ENCODE measurements at regions of chr12 and their contacts with region 1.

Region 1: DNA sequence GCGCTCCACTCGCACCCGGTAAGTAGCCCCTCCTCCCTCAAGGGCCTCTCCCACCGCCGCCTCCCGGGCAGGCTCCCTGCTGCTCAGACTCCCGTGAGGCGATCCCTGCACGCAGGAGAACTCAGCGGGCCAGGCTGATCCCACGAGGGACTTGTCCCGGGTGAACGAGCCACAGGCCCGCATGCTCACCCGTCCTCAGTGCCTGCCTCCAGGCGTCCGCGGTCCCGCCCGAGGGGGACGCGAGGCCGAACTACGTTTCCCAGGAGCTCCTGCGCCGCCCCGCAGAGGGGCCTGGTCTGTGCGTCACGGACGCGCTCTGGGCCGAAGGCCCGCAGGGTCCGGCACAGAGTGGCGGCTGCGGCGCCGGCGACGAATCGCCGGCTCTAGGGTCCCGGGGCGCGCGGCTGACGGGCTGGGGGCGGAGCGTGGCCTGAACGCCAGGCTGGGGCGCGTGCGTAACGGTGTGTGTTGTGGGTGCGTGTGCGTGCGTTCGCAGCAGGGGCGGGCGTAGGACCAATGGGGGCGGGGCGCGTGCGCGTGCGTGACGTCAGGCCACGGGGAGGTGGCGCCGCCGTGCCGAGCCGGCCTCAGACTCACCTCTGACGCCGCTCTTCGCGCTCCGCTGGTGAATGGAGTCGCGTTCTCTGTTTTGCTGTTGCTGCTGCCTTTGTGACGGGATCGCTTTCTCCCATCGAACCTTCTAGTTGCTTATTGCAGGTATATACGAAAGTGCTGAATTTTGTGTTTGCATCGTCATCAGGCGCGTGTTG is at the starts of genes ZNF10 and ZNF891:
- DNase-seq: peak; percentile 98
- ATAC-seq: peak; percentile 90
- H3K4me3 Mint-ChIP-seq: peak within 1 kb of the TSS; percentile 86
- H3K27ac Mint-ChIP-seq: peak within 1 kb of the TSS; percentile 98
- H3K4me1 Mint-ChIP-seq: peaks cover 15% of the 10 kb centered on the region
- H3K27me3 Mint-ChIP-seq: no peaks in the 10 kb centered on the region
- total RNA-seq, gene ZNF10: 4.8 to 5.1 TPM
- total RNA-seq, gene ZNF891: 1.9 to 2.1 TPM

Region 2: GRCh38 chr12:132710422-132711168 is 419.6 kb before region 1 on chr12 and contains the start of gene PGAM5:
- CTCF ChIA-PET with region 1: no interaction called
- POLR2A ChIA-PET with region 1: no interaction called
- intact Hi-C with region 1: loop called in 1 of 2 experiments (anchors 1 kb)
- DNase-seq: peak; percentile 92
- ATAC-seq: peak; percentile 92
- H3K4me3 Mint-ChIP-seq: peak within 1 kb of the TSS; percentile 75
- H3K27ac Mint-ChIP-seq: peak within 1 kb of the TSS; percentile 66
- H3K4me1 Mint-ChIP-seq: peaks cover 24% of the 10 kb centered on the region
- H3K27me3 Mint-ChIP-seq: no peaks in the 10 kb centered on the region
- total RNA-seq, gene PGAM5: 65.6 to 74.0 TPM

Region 3: GRCh38 chr12:132956011-132956788 is 174.0 kb before region 1 on chr12 and contains the start of gene ZNF605:
- CTCF ChIA-PET with region 1: no interaction called
- POLR2A ChIA-PET with region 1: no interaction called
- intact Hi-C with region 1: loop called in 1 of 2 experiments (anchors 1 kb)
- DNase-seq: peak; percentile 93
- ATAC-seq: peak; percentile 91
- H3K4me3 Mint-ChIP-seq: peak within 1 kb of the TSS; percentile 93
- H3K27ac Mint-ChIP-seq: peak within 1 kb of the TSS; percentile 88
- H3K4me1 Mint-ChIP-seq: peaks cover 22% of the 10 kb centered on the region
- H3K27me3 Mint-ChIP-seq: no peaks in the 10 kb centered on the region
- total RNA-seq, gene ZNF605: 8.0 to 8.3 TPM

Region 4: GRCh38 chr12:132986001-132986912 is 144.0 kb before region 1 on chr12 and contains the start of gene ZNF26:
- CTCF ChIA-PET with region 1: no interaction called
- POLR2A ChIA-PET with region 1: no interaction called
- intact Hi-C with region 1: loop called (anchors 1 to 2 kb)
- DNase-seq: peak; percentile 94
- ATAC-seq: peak; percentile 97
- H3K4me3 Mint-ChIP-seq: peak within 1 kb of the TSS; percentile 79
- H3K27ac Mint-ChIP-seq: peak within 1 kb of the TSS; percentile 96
- H3K4me1 Mint-ChIP-seq: peaks cover 26% of the 10 kb centered on the region
- H3K27me3 Mint-ChIP-seq: peaks cover 4% of the 10 kb centered on the region
- total RNA-seq, gene ZNF26: 12.3 to 17.0 TPM

Region 5: DNA sequence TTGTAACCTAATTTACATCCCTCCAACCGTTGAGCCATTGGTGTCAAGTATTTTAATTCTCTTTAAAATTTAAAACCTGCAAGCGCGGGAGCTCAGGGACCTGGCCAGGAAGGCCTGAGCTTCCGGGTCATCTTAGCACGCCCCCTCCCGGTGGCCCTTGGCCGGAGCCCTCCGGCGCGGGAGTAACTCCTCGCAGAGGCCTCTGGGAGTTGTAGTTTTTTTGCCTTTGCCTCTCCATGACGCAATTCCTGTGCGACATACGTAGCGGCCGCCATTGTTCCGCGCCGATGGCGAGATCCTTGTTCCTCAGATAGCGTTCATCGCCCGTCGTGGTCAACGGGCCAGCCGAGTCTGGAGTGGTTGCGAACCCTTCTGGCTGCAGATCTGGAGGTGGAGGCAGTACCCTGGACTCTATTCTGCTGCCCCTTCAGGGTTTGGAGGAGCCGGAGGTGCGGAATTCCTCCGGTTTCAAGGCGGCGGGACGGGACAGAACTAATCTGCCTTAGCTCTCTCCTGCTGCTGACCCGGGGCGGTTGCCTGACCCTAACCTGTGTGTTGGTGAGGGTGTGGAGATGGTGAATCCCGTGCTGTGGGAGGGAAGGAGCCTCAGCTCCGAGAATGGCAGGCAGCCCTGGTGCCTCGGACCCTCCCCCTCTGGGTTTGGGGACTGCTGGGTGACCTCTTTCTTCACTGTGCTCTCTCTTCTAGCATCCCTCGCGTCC is 51.2 kb after region 1 on chr12 and contains the start of gene ZNF268:
- CTCF ChIA-PET with region 1: no interaction called
- POLR2A ChIA-PET with region 1: no interaction called
- intact Hi-C with region 1: loop called (anchors 1 kb)
- DNase-seq: peak; percentile 95
- ATAC-seq: peak; percentile 96
- H3K4me3 Mint-ChIP-seq: peak within 1 kb of the TSS; percentile 90
- H3K27ac Mint-ChIP-seq: peak within 1 kb of the TSS; percentile 95
- H3K4me1 Mint-ChIP-seq: peaks cover 11% of the 10 kb centered on the region
- H3K27me3 Mint-ChIP-seq: no peaks in the 10 kb centered on the region
- total RNA-seq, gene ZNF268: 14.0 to 14.6 TPM